ENCODE measurements at regions of chr3 and their contacts with region 1.

Region 1: GRCh38 chr3:57692259-57693147 is at the start of gene DENND6A:
- DNase-seq: peak; percentile 96
- H3K4me3 ChIP-seq: peak within 1 kb of the TSS; percentile 60
- H3K4me3 Mint-ChIP-seq: peak within 1 kb of the TSS; percentile 82
- H3K27ac Mint-ChIP-seq: peak within 1 kb of the TSS; percentile 77
- H3K4me1 ChIP-seq: peaks cover 13% of the 10 kb centered on the region; the same call in 1 of the 2 replicates
- H3K4me1 Mint-ChIP-seq: peaks cover 6% of the 10 kb centered on the region
- H3K27me3 ChIP-seq: no peaks in the 10 kb centered on the region
- H3K27me3 Mint-ChIP-seq: no peaks in the 10 kb centered on the region
- CTCF ChIP-seq: no peak
- total RNA-seq, gene DENND6A: 20.6 and 21.8 TPM in 2 replicates

Region 2: DNA sequence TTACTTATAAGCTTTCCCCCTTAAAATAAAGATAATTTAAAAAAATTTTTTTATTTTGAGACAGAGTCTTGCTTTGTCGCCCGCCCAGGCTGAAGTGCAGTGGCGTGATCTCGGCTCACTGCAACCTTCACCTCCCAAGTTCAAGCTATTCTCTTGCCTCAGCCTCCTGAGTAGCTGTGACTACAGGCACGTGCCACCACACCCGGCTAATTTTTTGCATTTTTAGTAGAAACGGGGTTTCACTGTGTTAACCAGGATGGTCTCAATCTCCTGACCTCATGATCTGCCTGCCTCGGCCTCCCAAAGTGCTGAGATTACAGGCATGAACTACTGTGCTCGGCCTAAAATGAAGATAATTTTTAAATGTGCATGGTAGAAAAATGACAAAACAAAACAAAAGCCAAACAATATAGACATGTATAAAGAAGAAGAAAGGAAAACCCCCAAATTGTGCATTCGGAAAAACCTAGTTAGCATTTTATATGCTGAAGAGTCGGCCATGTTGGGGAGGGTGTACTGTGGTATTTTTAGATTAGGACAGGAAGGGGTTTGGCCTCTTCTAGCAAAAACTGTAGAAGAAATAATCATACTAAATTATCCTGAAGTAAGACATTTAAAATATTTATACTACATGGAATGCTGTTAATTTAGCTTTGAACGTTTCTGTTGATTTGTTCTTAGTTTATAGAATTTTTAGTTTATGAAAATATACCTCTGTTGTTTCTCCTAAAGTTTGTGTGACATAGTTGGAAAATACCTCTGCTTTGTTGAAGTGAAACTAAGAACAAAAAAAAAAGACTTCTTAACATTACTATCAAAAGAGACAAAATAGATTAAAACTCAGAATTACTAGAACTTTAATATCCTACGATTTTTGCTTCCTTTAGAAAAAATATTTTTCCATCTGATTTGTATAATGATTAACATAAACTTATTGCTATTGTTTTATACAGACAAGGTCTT is 457.6 kb before region 1 on chr3:
- CTCF ChIA-PET with region 1: no interaction called
- POLR2A ChIA-PET with region 1: no interaction called
- intact Hi-C with region 1: no loop called
- DNase-seq: no peak
- H3K4me3 ChIP-seq: no peak overlapping the region
- H3K4me3 Mint-ChIP-seq: no peak overlapping the region
- H3K27ac Mint-ChIP-seq: no peak overlapping the region
- H3K4me1 ChIP-seq: no peaks in the 10 kb centered on the region
- H3K4me1 Mint-ChIP-seq: no peaks in the 10 kb centered on the region
- H3K27me3 ChIP-seq: no peaks in the 10 kb centered on the region
- H3K27me3 Mint-ChIP-seq: no peaks in the 10 kb centered on the region
- CTCF ChIP-seq: no peak

Region 3: DNA sequence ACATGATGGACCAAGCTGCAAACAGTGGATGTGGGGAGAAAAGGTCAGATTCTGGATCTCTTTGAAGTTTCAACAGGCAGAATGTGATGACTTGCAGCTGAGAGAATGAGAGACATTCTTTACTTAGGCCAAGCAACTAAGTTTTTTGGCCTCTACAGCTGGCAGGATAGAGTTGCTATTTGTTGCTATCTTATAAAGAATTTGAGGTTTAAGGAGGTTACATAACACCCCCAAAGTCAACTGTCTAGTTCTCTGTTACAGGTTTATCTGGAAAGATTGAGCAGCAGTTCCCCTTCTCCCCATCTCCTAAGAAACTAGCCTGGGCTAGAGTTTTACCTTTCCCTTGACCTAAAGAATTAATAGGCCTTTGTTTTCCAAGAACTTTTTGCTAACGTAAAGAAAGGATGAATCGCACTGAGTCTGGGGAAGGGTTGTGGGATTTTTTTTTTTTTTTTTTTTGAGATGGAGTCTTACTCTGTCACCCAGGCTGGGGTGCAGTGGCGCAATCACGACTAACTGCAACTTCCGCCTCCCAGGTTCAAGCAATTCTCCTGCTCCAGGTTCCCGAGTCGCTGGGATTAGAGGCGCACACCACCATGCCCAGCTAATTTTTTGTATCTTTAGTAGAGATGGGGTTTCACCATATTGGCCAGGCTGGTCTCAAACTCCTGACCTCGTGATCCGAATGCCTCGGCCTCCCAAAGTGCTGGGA is 37.0 kb after region 1 on chr3:
- CTCF ChIA-PET with region 1: no interaction called
- POLR2A ChIA-PET with region 1: no interaction called
- intact Hi-C with region 1: loop called (anchors 2 kb)
- DNase-seq: peak; percentile 39 to 41
- H3K4me3 ChIP-seq: no peak overlapping the region
- H3K4me3 Mint-ChIP-seq: peak overlapping the region; percentile 7
- H3K27ac Mint-ChIP-seq: no peak overlapping the region
- H3K4me1 ChIP-seq: peaks cover 4% of the 10 kb centered on the region; the same call in 1 of the 2 replicates
- H3K4me1 Mint-ChIP-seq: peaks cover 15% of the 10 kb centered on the region
- H3K27me3 ChIP-seq: no peaks in the 10 kb centered on the region
- H3K27me3 Mint-ChIP-seq: no peaks in the 10 kb centered on the region
- CTCF ChIP-seq: no peak

Measured in Caco-2 (cell line).